ENCODE measurements at regions of chr1 and their contacts with region 1.

Region 1: GRCh38 chr1:88985029-88985428 is 7.4 kb downstream of the KYAT3 start:
- DNase-seq: no peak
- H3K4me3 ChIP-seq: no peak overlapping the region
- H3K27ac ChIP-seq: peak overlapping the region; percentile 48 to 70 (median 60)
- H3K4me1 ChIP-seq: peaks cover 12 to 47% (median 30%) of the 10 kb centered on the region in 4 donors
- H3K27me3 ChIP-seq: no peaks in the 10 kb centered on the region
- CTCF ChIP-seq: no peak
- EP300 ChIP-seq: no peak
- POLR2A ChIP-seq: no peak

Region 2: GRCh38 chr1:89538361-89538760 is 553.3 kb after region 1 on chr1:
- in situ Hi-C with region 1: no loop called
- intact Hi-C with region 1: loop called (anchors 5 kb)
- DNase-seq: no peak
- H3K4me3 ChIP-seq: no peak overlapping the region
- H3K27ac ChIP-seq: no peak overlapping the region
- H3K4me1 ChIP-seq: no peaks in the 10 kb centered on the region
- H3K27me3 ChIP-seq: no peaks in the 10 kb centered on the region
- CTCF ChIP-seq: no peak
- EP300 ChIP-seq: no peak
- POLR2A ChIP-seq: no peak

Measured in transverse colon (tissue), 4 donors.